Activated naive CD4-positive, alpha-beta T cell treated with anti-CD3 and anti-CD28 coated beads for 36 hours (primary cell): ENCODE measurements at regions of chrX and their contacts with region 1.

Region 1: GRCh38 chrX:125132285-125132684 is 187.4 kb upstream of the TEX13C start:
- DNase-seq: peak; percentile 4
- H3K4me3 Mint-ChIP-seq: no peak overlapping the region
- H3K27ac Mint-ChIP-seq: no peak overlapping the region
- H3K4me1 Mint-ChIP-seq: no peaks in the 10 kb centered on the region
- H3K27me3 Mint-ChIP-seq: peaks cover 2% of the 10 kb centered on the region

Region 2: DNA sequence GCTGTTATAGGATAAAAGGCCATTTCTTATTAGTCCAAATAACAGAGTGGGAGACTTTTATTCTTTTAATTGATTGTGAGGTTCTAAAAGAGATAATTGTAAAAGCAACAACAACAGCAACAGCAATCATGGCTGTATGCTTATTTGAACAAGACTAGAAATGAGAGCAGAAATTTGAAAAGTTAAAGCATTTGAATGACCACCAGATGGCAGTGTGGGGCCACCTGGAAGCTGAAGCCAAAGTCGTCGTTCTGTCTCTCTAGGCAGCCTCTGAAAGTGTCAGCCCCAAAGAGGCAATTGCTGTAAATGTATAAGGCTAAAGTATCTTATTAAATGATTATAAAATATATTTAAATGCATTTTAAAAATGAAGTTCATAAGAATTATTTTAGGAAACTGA is 743.7 kb before region 1 on chrX:
- CTCF ChIA-PET with region 1: interaction called, 3 read pairs
- intact Hi-C with region 1: loop called (anchors 2 kb)
- DNase-seq: peak; percentile 75
- H3K4me3 Mint-ChIP-seq: no peak overlapping the region
- H3K27ac Mint-ChIP-seq: no peak overlapping the region
- H3K4me1 Mint-ChIP-seq: peaks cover 13% of the 10 kb centered on the region
- H3K27me3 Mint-ChIP-seq: no peaks in the 10 kb centered on the region

Region 3: GRCh38 chrX:124863303-124863702 is 269.0 kb before region 1 on chrX:
- CTCF ChIA-PET with region 1: no interaction called
- intact Hi-C with region 1: no loop called
- DNase-seq: no peak
- H3K4me3 Mint-ChIP-seq: no peak overlapping the region
- H3K27ac Mint-ChIP-seq: no peak overlapping the region
- H3K4me1 Mint-ChIP-seq: no peaks in the 10 kb centered on the region
- H3K27me3 Mint-ChIP-seq: no peaks in the 10 kb centered on the region

Region 4: DNA sequence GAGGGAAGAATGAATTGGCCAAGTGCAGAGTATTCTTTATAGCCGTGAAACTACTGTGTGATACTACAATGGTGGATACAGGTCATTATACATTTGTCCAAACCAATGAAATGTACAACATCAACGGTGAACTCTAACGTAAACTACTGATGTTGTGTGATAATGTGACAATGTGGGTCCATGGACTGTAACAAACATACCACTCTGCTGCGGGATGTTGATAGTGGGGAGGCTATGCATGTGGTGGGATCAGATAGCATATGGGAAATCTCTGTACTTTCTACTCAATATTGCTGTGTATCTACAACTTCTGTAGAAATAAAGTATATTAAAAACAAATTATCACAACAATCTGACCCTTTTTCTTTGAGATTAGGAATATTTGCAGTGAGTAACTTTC is 288.5 kb after region 1 on chrX:
- CTCF ChIA-PET with region 1: no interaction called
- intact Hi-C with region 1: no loop called
- DNase-seq: no peak
- H3K4me3 Mint-ChIP-seq: no peak overlapping the region
- H3K27ac Mint-ChIP-seq: no peak overlapping the region
- H3K4me1 Mint-ChIP-seq: no peaks in the 10 kb centered on the region
- H3K27me3 Mint-ChIP-seq: peaks cover 2% of the 10 kb centered on the region